ENCODE measurements at regions of chr6 and their contacts with region 1.

Region 1: GRCh38 chr6:27528714-27529113 is 55.8 kb upstream of the ZNF184 start:
- DNase-seq: no peak
- H3K4me3 ChIP-seq: no peak overlapping the region
- H3K27ac ChIP-seq: no peak overlapping the region
- H3K4me1 ChIP-seq: no peaks in the 10 kb centered on the region
- H3K27me3 ChIP-seq: peaks cover 0 to 40% (median 0%) of the 10 kb centered on the region in 3 donors
- CTCF ChIP-seq: no peak
- EP300 ChIP-seq: no peak
- POLR2A ChIP-seq: no peak

Region 2: GRCh38 chr6:27374824-27375612 is 153.7 kb before region 1 on chr6:
- intact Hi-C with region 1: loop called (anchors 10 kb)
- DNase-seq: peak; percentile 91
- H3K4me3 ChIP-seq: peak overlapping the region; percentile 61 to 80 (median 72)
- H3K27ac ChIP-seq: peak overlapping the region; percentile 8 to 67 (median 41)
- H3K4me1 ChIP-seq: peaks cover 0 to 12% (median 3%) of the 10 kb centered on the region in 4 donors
- H3K27me3 ChIP-seq: no peaks in the 10 kb centered on the region
- CTCF ChIP-seq: no peak
- EP300 ChIP-seq: no peak
- POLR2A ChIP-seq: no peak